ENCODE measurements at regions of chr15 and their contacts with region 1.

Region 1: GRCh38 chr15:74011610-74012009 is 17.1 kb downstream of the PML start:
- DNase-seq: no peak
- ATAC-seq: no peak
- H3K4me3 ChIP-seq: no peak overlapping the region
- H3K27ac ChIP-seq: no peak overlapping the region
- H3K4me1 ChIP-seq: no peaks in the 10 kb centered on the region; a peak in 1 of 4 replicates
- H3K27me3 ChIP-seq: no peaks in the 10 kb centered on the region
- CTCF ChIP-seq: no peak
- POLR2A ChIP-seq: no peak
- RAD21 ChIP-seq: no peak

Region 2: DNA sequence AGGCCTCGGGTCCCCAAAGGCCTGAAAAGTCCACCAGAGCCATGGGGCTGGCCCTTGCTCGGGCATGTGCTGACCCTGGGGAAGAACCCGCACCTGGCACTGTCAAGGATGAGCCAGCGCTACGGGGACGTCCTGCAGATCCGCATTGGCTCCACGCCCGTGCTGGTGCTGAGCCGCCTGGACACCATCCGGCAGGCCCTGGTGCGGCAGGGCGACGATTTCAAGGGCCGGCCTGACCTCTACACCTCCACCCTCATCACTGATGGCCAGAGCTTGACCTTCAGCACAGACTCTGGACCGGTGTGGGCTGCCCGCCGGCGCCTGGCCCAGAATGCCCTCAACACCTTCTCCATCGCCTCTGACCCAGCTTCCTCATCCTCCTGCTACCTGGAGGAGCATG is 738.2 kb after region 1 on chr15:
- CTCF ChIA-PET with region 1: no interaction called
- POLR2A ChIA-PET with region 1: no interaction called
- RAD21 ChIA-PET with region 1: no interaction called
- intact Hi-C with region 1: loop called (anchors 10 kb)
- DNase-seq: no peak
- ATAC-seq: no peak
- H3K4me3 ChIP-seq: no peak overlapping the region
- H3K27ac ChIP-seq: no peak overlapping the region
- H3K4me1 ChIP-seq: peaks cover 0 to 10% of the 10 kb centered on the region in 2 experiments; a peak in 2 of 4 replicates
- H3K27me3 ChIP-seq: no peaks in the 10 kb centered on the region
- CTCF ChIP-seq: no peak
- POLR2A ChIP-seq: no peak
- RAD21 ChIP-seq: no peak